HepG2 (cell line): ENCODE measurements at regions of chr1 and their contacts with region 1.

Region 1: GRCh38 chr1:228165372-228166169 is at the start of gene IBA57:
- DNase-seq: peak; percentile 95
- ATAC-seq: peak; percentile 85
- H3K4me3 ChIP-seq: peak within 1 kb of the TSS; percentile 61 to 88 (median 84)
- H3K27ac ChIP-seq: peak within 1 kb of the TSS; percentile 99
- H3K4me1 ChIP-seq: peaks cover 50% of the 10 kb centered on the region
- H3K27me3 ChIP-seq: no peaks in the 10 kb centered on the region; a peak in 1 of 5 replicates
- CTCF ChIP-seq: peak; percentile 90
- EP300 ChIP-seq: no peak
- POLR2A ChIP-seq: peak in 1 of 2 experiments; percentile 73; a peak in 2 of 4 replicates
- RAD21 ChIP-seq: peak; percentile 77
- total RNA-seq, gene IBA57: 9.7 and 10.2 TPM in 2 replicates

Region 2: GRCh38 chr1:228109073-228109961 is 56.3 kb before region 1 on chr1 and contains the start of gene MRPL55:
- CTCF ChIA-PET with region 1: no interaction called
- POLR2A ChIA-PET with region 1: interaction called, 38 read pairs
- in situ Hi-C with region 1: no loop called
- intact Hi-C with region 1: no loop called
- DNase-seq: peak; percentile 92
- ATAC-seq: peak; percentile 80
- H3K4me3 ChIP-seq: peak within 1 kb of the TSS; percentile 90 to 99 (median 97)
- H3K27ac ChIP-seq: peak within 1 kb of the TSS; percentile 90
- H3K4me1 ChIP-seq: peaks cover 34% of the 10 kb centered on the region
- H3K27me3 ChIP-seq: no peaks in the 10 kb centered on the region; a peak in 1 of 5 replicates
- CTCF ChIP-seq: peak; percentile 57
- EP300 ChIP-seq: peak; percentile 5 to 29; a peak in 1 of 4 replicates
- POLR2A ChIP-seq: peak in 1 of 2 experiments; percentile 95; a peak in 2 of 4 replicates
- RAD21 ChIP-seq: no peak
- total RNA-seq, gene MRPL55: 92.9 and 97.9 TPM in 2 replicates

Region 3: GRCh38 chr1:228120857-228121489 is 44.6 kb before region 1 on chr1:
- CTCF ChIA-PET with region 1: no interaction called
- POLR2A ChIA-PET with region 1: interaction called, 11 read pairs
- in situ Hi-C with region 1: no loop called
- intact Hi-C with region 1: no loop called
- DNase-seq: no peak
- ATAC-seq: no peak
- H3K4me3 ChIP-seq: no peak overlapping the region
- H3K27ac ChIP-seq: no peak overlapping the region
- H3K4me1 ChIP-seq: peaks cover 14% of the 10 kb centered on the region
- H3K27me3 ChIP-seq: no peaks in the 10 kb centered on the region
- CTCF ChIP-seq: no peak
- EP300 ChIP-seq: no peak
- POLR2A ChIP-seq: no peak
- RAD21 ChIP-seq: no peak

Region 4: GRCh38 chr1:228131766-228132165 is 33.8 kb before region 1 on chr1:
- CTCF ChIA-PET with region 1: interaction called, 7 read pairs
- POLR2A ChIA-PET with region 1: interaction called, 38 read pairs
- in situ Hi-C with region 1: no loop called
- intact Hi-C with region 1: loop called (anchors 2 kb)
- DNase-seq: no peak
- ATAC-seq: no peak
- H3K4me3 ChIP-seq: no peak overlapping the region; a peak in 1 of 6 replicates
- H3K27ac ChIP-seq: no peak overlapping the region
- H3K4me1 ChIP-seq: 0 out of 2 replicates have a peak, but pooled peaks cover 4% of the 10 kb centered on the region
- H3K27me3 ChIP-seq: peaks cover 0 to 8% of the 10 kb centered on the region in 2 experiments; a peak in 2 of 5 replicates
- CTCF ChIP-seq: no peak
- EP300 ChIP-seq: no peak
- POLR2A ChIP-seq: no peak
- RAD21 ChIP-seq: no peak

Region 5: GRCh38 chr1:228150461-228151179 is 15.0 kb before region 1 on chr1:
- CTCF ChIA-PET with region 1: no interaction called
- POLR2A ChIA-PET with region 1: interaction called, 72 read pairs
- in situ Hi-C with region 1: no loop called
- intact Hi-C with region 1: no loop called
- DNase-seq: peak; percentile 41
- ATAC-seq: peak; percentile 72
- H3K4me3 ChIP-seq: peak overlapping the region; percentile 54 to 78 (median 63)
- H3K27ac ChIP-seq: peak overlapping the region; percentile 73
- H3K4me1 ChIP-seq: peaks cover 34% of the 10 kb centered on the region
- H3K27me3 ChIP-seq: no peaks in the 10 kb centered on the region
- CTCF ChIP-seq: no peak
- EP300 ChIP-seq: no peak
- POLR2A ChIP-seq: no peak
- RAD21 ChIP-seq: no peak